Activated B cell treated with CpG ODN at 0.5 μM for 24 hours (primary cell): ENCODE measurements at regions of chr2 and their contacts with region 1.

Region 1: GRCh38 chr2:168758970-168759820 is 43.2 kb upstream of the NOSTRIN start:
- DNase-seq: no peak
- ATAC-seq: peak; percentile 56
- H3K4me3 Mint-ChIP-seq: no peak overlapping the region
- H3K27ac Mint-ChIP-seq: no peak overlapping the region
- H3K4me1 Mint-ChIP-seq: peaks cover 3% of the 10 kb centered on the region
- H3K27me3 Mint-ChIP-seq: no peaks in the 10 kb centered on the region
- CTCF ChIP-seq: no peak

Region 2: GRCh38 chr2:168160897-168161296 is 598.3 kb before region 1 on chr2:
- CTCF ChIA-PET with region 1: interaction called, 3 read pairs
- POLR2A ChIA-PET with region 1: no interaction called
- intact Hi-C with region 1: loop called (anchors 2 kb)
- DNase-seq: no peak
- ATAC-seq: peak; percentile 40
- H3K4me3 Mint-ChIP-seq: no peak overlapping the region
- H3K27ac Mint-ChIP-seq: no peak overlapping the region
- H3K4me1 Mint-ChIP-seq: peaks cover 9% of the 10 kb centered on the region
- H3K27me3 Mint-ChIP-seq: no peaks in the 10 kb centered on the region
- CTCF ChIP-seq: no peak

Region 3: GRCh38 chr2:168375195-168375798 is 383.9 kb before region 1 on chr2:
- CTCF ChIA-PET with region 1: no interaction called
- POLR2A ChIA-PET with region 1: no interaction called
- intact Hi-C with region 1: loop called (anchors 1 kb)
- DNase-seq: no peak
- ATAC-seq: no peak
- H3K4me3 Mint-ChIP-seq: no peak overlapping the region
- H3K27ac Mint-ChIP-seq: no peak overlapping the region
- H3K4me1 Mint-ChIP-seq: peaks cover 10% of the 10 kb centered on the region
- H3K27me3 Mint-ChIP-seq: peaks cover 4% of the 10 kb centered on the region
- CTCF ChIP-seq: no peak

Region 4: DNA sequence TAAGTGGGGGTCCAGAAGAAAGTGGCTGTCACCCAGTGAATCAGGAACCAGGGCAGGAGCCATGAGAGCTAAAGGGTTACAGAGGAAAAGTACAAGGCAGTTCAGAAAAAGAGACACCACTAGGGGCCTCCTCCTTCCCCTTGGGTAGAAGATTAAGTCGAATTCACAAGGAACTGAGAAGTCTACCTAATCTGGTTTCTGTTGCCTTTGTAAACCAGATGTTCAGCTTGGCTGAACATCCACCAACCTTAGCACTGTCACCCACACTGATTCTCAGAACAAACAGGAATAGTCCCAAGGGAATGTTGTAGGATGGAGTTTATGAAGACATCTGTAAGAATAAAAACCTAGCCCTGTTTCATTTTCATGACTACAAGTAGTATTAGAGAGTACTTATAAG is 47.1 kb before region 1 on chr2:
- CTCF ChIA-PET with region 1: no interaction called
- POLR2A ChIA-PET with region 1: no interaction called
- intact Hi-C with region 1: loop called (anchors 1 kb)
- DNase-seq: no peak
- ATAC-seq: peak; percentile 97
- H3K4me3 Mint-ChIP-seq: peak overlapping the region; percentile 32
- H3K27ac Mint-ChIP-seq: peak overlapping the region; percentile 72
- H3K4me1 Mint-ChIP-seq: peaks cover 20% of the 10 kb centered on the region
- H3K27me3 Mint-ChIP-seq: no peaks in the 10 kb centered on the region
- CTCF ChIP-seq: no peak